ENCODE measurements at regions of chr6 and their contacts with region 1.

Region 1: GRCh38 chr6:37222125-37222967 is 35.2 kb upstream of the TBC1D22B start:
- DNase-seq: peak; percentile 89
- ATAC-seq: peak; percentile 99
- H3K4me3 Mint-ChIP-seq: peak overlapping the region; percentile 67
- H3K27ac Mint-ChIP-seq: peak overlapping the region; percentile 63
- H3K4me1 Mint-ChIP-seq: peaks cover 15% of the 10 kb centered on the region
- H3K27me3 Mint-ChIP-seq: no peaks in the 10 kb centered on the region

Region 2: GRCh38 chr6:37059344-37060206 is 162.8 kb before region 1 on chr6:
- CTCF ChIA-PET with region 1: no interaction called
- POLR2A ChIA-PET with region 1: no interaction called
- intact Hi-C with region 1: no loop called
- DNase-seq: peak; percentile 36
- ATAC-seq: peak; percentile 57
- H3K4me3 Mint-ChIP-seq: no peak overlapping the region
- H3K27ac Mint-ChIP-seq: no peak overlapping the region
- H3K4me1 Mint-ChIP-seq: peaks cover 3% of the 10 kb centered on the region
- H3K27me3 Mint-ChIP-seq: no peaks in the 10 kb centered on the region

Region 3: GRCh38 chr6:37182736-37183590 is 39.4 kb before region 1 on chr6:
- CTCF ChIA-PET with region 1: interaction called, 5 read pairs
- POLR2A ChIA-PET with region 1: interaction called, 12 read pairs
- intact Hi-C with region 1: no loop called
- DNase-seq: peak; percentile 77
- ATAC-seq: peak; percentile 91
- H3K4me3 Mint-ChIP-seq: peak overlapping the region; percentile 26
- H3K27ac Mint-ChIP-seq: peak overlapping the region; percentile 97
- H3K4me1 Mint-ChIP-seq: peaks cover 44% of the 10 kb centered on the region
- H3K27me3 Mint-ChIP-seq: no peaks in the 10 kb centered on the region

Region 4: GRCh38 chr6:37239950-37240713 is 17.8 kb after region 1 on chr6:
- CTCF ChIA-PET with region 1: interaction called, 4 read pairs
- POLR2A ChIA-PET with region 1: no interaction called
- intact Hi-C with region 1: loop called in 1 of 2 experiments (anchors 1 kb)
- DNase-seq: peak; percentile 90
- ATAC-seq: peak; percentile 92
- H3K4me3 Mint-ChIP-seq: peak overlapping the region; percentile 19
- H3K27ac Mint-ChIP-seq: peak overlapping the region; percentile 84
- H3K4me1 Mint-ChIP-seq: peaks cover 46% of the 10 kb centered on the region
- H3K27me3 Mint-ChIP-seq: no peaks in the 10 kb centered on the region

Region 5: DNA sequence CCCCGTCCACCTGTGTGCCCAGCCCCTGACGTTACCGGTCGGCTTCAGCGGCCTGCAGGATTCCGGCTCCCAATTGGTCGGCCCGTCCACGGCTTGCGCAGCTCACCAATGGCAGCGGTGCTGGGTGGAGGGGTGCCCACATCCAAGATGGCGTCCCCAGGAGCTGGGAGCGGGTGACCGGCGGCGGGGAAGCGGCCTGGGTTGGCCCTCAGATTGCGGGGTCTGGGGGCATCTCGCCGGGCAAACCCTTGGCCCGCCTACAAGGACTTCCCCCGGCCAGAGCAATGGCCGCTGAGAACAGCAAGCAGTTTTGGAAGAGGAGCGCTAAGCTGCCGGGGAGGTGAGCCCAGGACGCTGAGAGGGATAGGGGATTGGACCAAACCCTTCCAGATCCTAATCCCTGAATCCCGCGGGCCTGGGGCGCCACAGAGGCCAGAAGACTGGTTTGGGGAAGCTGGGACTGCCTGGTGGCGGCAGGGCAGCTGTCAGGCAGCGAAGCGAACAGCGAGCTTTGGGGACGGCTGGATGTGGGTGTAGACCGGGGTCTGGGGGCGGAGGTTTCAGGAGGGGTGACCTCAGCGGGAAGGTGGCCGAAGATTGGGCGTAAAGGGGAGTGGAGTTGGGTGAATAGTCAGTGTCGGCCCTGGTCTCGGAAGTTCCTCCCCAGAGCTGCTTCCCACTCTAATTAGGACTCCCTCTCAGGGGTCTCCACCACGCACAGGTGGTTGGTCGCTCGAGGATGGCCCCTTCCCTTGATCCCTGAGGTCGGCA is 35.5 kb after region 1 on chr6 and contains the starts of genes TBC1D22B and TMEM217:
- CTCF ChIA-PET with region 1: interaction called, 3 read pairs
- POLR2A ChIA-PET with region 1: no interaction called
- intact Hi-C with region 1: loop called (anchors 1 to 5 kb)
- DNase-seq: peak; percentile 98
- ATAC-seq: peak; percentile 99
- H3K4me3 Mint-ChIP-seq: peak within 1 kb of the TSS; percentile 74
- H3K27ac Mint-ChIP-seq: peak within 1 kb of the TSS; percentile 94
- H3K4me1 Mint-ChIP-seq: peaks cover 45% of the 10 kb centered on the region
- H3K27me3 Mint-ChIP-seq: no peaks in the 10 kb centered on the region
- total RNA-seq, gene TBC1D22B: 14.9 to 17.0 TPM
- total RNA-seq, gene TMEM217: 2.5 TPM

Region 6: DNA sequence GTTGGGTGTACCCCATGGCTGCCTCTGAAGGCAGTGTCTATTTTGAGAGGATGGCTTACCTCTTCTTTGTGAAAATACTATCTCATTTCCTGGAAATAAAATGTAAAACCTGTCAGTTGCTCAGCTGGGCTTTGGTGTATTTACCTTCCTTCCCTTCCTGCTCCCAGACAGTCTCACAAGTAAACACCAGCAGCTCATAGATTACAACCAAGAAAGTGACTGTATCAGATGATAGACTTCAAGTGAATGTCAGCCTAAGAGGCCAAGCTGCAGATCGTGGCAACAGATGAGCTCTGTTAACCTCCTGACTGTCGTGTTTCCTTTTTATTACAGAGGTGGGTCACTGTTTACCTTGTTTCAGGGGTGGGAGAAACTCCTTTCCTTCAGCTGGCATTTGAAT is 168.8 kb after region 1 on chr6:
- CTCF ChIA-PET with region 1: no interaction called
- POLR2A ChIA-PET with region 1: no interaction called
- intact Hi-C with region 1: no loop called
- DNase-seq: no peak
- ATAC-seq: no peak
- H3K4me3 Mint-ChIP-seq: no peak overlapping the region
- H3K27ac Mint-ChIP-seq: no peak overlapping the region
- H3K4me1 Mint-ChIP-seq: no peaks in the 10 kb centered on the region
- H3K27me3 Mint-ChIP-seq: no peaks in the 10 kb centered on the region

Region 7: GRCh38 chr6:37418722-37419121 is 196.4 kb after region 1 on chr6:
- CTCF ChIA-PET with region 1: no interaction called
- POLR2A ChIA-PET with region 1: no interaction called
- intact Hi-C with region 1: loop called in 1 of 2 experiments (anchors 5 kb)
- DNase-seq: no peak
- ATAC-seq: no peak
- H3K4me3 Mint-ChIP-seq: no peak overlapping the region
- H3K27ac Mint-ChIP-seq: no peak overlapping the region
- H3K4me1 Mint-ChIP-seq: no peaks in the 10 kb centered on the region
- H3K27me3 Mint-ChIP-seq: no peaks in the 10 kb centered on the region

Region 8: GRCh38 chr6:38579010-38579628 is 1356.8 kb after region 1 on chr6:
- CTCF ChIA-PET with region 1: no interaction called
- POLR2A ChIA-PET with region 1: no interaction called
- intact Hi-C with region 1: no loop called
- DNase-seq: no peak
- ATAC-seq: no peak
- H3K4me3 Mint-ChIP-seq: no peak overlapping the region
- H3K27ac Mint-ChIP-seq: no peak overlapping the region
- H3K4me1 Mint-ChIP-seq: peaks cover 16% of the 10 kb centered on the region
- H3K27me3 Mint-ChIP-seq: no peaks in the 10 kb centered on the region